ENCODE measurements at regions of chr5 and their contacts with region 1.

Region 1: GRCh38 chr5:72955768-72956323 is at the start of gene FCHO2:
- DNase-seq: peak; percentile 98 to 100
- ATAC-seq: peak; percentile 94 to 99 (median 98)
- H3K4me3 ChIP-seq: peak within 1 kb of the TSS; percentile 54 to 91 (median 83)
- H3K27ac ChIP-seq: peak within 1 kb of the TSS; percentile 90 to 99 (median 97)
- H3K4me1 ChIP-seq: peaks cover 3 to 67% (median 40%) of the 10 kb centered on the region in 9 donors
- H3K27me3 ChIP-seq: no peaks in the 10 kb centered on the region
- CTCF ChIP-seq: peak; percentile 69 to 97 (median 91)
- total RNA-seq, gene FCHO2: 18.0 to 26.6 (median 20.2) TPM

Region 2: GRCh38 chr5:72938206-72938605 is 17.6 kb before region 1 on chr5:
- intact Hi-C with region 1: loop called in 1 of 10 experiments (anchors 1 kb)
- DNase-seq: peak in 1 of 2 donors; percentile 27
- ATAC-seq: peak; percentile 74 to 91 (median 87)
- H3K4me3 ChIP-seq: no peak overlapping the region
- H3K27ac ChIP-seq: peak overlapping the region in 9 of 10 donors; percentile 21 to 85 (median 63)
- H3K4me1 ChIP-seq: peaks cover 0 to 41% (median 21%) of the 10 kb centered on the region in 9 donors
- H3K27me3 ChIP-seq: no peaks in the 10 kb centered on the region
- CTCF ChIP-seq: no peak

Measured in heart right ventricle (tissue), 16 donors.